ENCODE measurements at regions of chr4 and their contacts with region 1.

Region 1: GRCh38 chr4:151950993-151951670 is 190.3 kb upstream of the GATB start:
- DNase-seq: no peak

Region 2: GRCh38 chr4:151266497-151266896 is 684.6 kb before region 1 on chr4:
- intact Hi-C with region 1: no loop called
- DNase-seq: no peak

Region 3: GRCh38 chr4:152021788-152022438 is 70.8 kb after region 1 on chr4:
- intact Hi-C with region 1: no loop called
- DNase-seq: peak; percentile 79

Region 4: GRCh38 chr4:152039023-152039481 is 87.9 kb after region 1 on chr4:
- intact Hi-C with region 1: no loop called
- DNase-seq: no peak

Region 5: DNA sequence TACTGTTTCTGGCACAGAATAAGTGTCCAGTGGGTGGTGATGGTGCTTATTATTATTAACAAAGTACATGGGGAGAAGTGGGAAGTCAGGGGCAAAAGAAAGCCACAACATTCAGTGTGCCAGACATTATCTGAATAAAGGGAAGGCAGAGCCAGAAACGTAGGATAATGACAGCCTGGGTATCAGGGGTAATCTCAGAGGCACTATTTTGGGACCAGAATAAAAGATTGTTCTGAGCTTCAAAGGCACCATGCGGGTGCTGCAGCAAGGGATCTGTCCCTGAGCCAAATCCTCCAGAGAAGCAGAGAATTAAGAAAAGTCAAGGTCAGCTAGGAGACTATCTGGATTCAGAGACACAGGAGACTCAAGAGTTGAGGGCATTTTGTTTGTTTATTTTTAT is 138.5 kb after region 1 on chr4:
- intact Hi-C with region 1: loop called (anchors 5 kb)
- DNase-seq: no peak

Region 6: GRCh38 chr4:152189451-152190179 is 238.5 kb after region 1 on chr4:
- intact Hi-C with region 1: no loop called
- DNase-seq: no peak

Measured in cardiac septum (tissue), 1 donor.